Posterior cingulate gyrus (tissue), 11 donors: ENCODE measurements at regions of chr13 and their contacts with region 1.

Region 1: GRCh38 chr13:41652727-41653361 is 195.5 kb downstream of the RGCC start:
- DNase-seq: peak in 1 of 10 donors; percentile 50

Region 2: DNA sequence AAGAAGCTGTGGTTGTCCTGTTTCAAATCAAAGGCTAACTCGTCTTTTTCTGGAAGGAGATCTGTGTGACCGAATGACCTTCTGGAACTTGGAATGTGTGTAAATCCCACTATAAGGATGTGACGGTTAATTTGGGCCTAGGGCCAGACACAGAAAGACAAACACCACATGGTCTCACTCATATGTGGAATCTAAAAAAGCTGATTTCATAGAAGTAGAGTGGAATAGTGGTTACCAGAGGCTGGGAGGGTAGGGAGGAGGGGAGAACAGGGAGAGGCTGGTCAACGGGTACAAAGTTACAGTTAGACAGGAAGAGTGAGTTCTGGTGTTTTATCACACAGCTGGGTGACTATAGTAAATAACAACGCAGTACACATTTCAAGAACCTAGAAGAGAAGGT is 234.8 kb before region 1 on chr13:
- intact Hi-C with region 1: no loop called
- DNase-seq: no peak

Region 3: GRCh38 chr13:41428155-41428554 is 224.7 kb before region 1 on chr13:
- intact Hi-C with region 1: loop called (anchors 5 kb)
- DNase-seq: peak in 8 of 10 donors; percentile 21 to 93 (median 61)